Keratinocyte (primary cell): ENCODE measurements at regions of chr4 and their contacts with region 1.

Region 1: DNA sequence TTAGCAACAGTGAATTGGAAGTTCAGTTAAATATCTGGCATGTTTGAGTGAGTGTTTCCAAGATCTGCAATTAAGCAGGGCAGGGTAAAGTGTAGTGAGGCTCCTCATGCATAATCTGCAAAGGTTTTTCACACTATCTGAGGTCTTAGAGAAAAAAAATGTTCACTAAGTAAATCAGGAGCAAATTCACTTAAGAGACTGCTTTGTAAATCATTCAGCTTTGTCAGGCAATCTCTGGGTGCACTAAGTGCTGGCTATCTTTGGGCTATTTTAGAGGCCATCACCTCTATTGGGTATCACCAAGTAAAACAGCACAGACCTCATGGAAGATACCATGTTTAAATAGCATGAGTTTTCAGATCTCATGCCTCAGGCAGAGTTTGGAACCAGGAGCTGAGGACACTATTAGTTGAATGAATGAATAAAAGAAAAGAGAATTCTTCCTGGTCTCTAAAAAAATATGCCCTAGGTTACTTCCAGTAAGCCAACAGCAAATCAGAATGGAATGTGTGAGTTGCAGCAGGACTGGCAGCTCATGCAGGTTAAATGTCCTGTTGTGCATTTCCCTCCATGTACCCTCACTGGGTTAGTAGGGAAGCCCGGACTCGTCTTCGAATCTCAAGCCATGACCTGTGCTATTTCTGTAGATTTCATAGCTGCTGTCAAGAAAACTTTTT is 195.3 kb downstream of the KCNIP4 start:
- DNase-seq: no peak
- H3K4me3 ChIP-seq: no peak overlapping the region
- H3K27ac ChIP-seq: no peak overlapping the region
- H3K4me1 ChIP-seq: no peaks in the 10 kb centered on the region
- H3K27me3 ChIP-seq: no peaks in the 10 kb centered on the region
- CTCF ChIP-seq: no peak

Region 2: DNA sequence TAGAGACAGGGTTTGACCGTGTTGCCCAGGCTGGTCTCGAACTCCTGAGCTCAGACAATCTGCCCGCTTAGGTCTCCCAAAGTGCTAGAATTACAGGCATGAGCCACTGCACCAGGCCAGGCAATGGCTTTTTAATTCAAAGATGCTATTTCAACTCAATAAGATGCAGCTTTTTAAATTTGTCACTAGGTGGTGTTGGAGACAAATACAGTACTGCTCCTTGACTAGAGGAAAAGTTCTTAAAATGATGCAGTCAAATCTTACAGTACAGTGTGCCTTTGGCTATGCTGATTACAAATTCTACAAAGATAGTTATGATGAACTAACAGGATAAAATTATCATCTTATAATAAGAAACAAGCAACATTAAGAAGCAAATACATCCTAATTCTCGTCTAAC is 245.8 kb before region 1 on chr4:
- dilution Hi-C with region 1: loop called (anchors 10 kb)
- DNase-seq: no peak
- H3K4me3 ChIP-seq: no peak overlapping the region
- H3K27ac ChIP-seq: no peak overlapping the region
- H3K4me1 ChIP-seq: no peaks in the 10 kb centered on the region
- H3K27me3 ChIP-seq: no peaks in the 10 kb centered on the region
- CTCF ChIP-seq: peak in 2 of 3 experiments; percentile 25 to 28

Region 3: DNA sequence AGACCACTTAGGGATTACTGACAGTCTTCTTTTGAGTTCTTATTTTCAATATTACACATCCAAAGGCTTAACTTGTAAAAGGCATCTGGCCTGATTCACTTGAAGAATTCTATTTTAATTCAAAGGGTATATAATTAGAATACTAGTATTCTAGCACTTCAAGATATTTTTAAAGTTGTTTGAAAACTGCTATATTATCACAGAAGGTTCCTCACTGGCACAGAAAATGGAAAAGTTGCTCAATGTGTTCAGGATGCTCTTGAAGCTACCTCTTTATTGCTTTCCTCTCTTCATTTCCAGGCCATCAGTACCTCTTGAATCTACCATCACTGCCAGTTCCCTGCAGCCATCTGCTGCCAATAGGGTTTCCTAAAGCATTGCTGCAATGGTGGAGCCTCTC is 76.0 kb before region 1 on chr4:
- dilution Hi-C with region 1: no loop called
- DNase-seq: no peak
- H3K4me3 ChIP-seq: no peak overlapping the region
- H3K27ac ChIP-seq: no peak overlapping the region
- H3K4me1 ChIP-seq: no peaks in the 10 kb centered on the region
- H3K27me3 ChIP-seq: no peaks in the 10 kb centered on the region
- CTCF ChIP-seq: no peak

Region 4: GRCh38 chr4:22720091-22720490 is 966.9 kb after region 1 on chr4:
- dilution Hi-C with region 1: no loop called
- DNase-seq: no peak
- H3K4me3 ChIP-seq: no peak overlapping the region
- H3K27ac ChIP-seq: no peak overlapping the region
- H3K4me1 ChIP-seq: no peaks in the 10 kb centered on the region
- H3K27me3 ChIP-seq: no peaks in the 10 kb centered on the region
- CTCF ChIP-seq: no peak